Endothelial cell of umbilical vein (primary cell): ENCODE measurements at regions of chr11 and their contacts with region 1.

Region 1: DNA sequence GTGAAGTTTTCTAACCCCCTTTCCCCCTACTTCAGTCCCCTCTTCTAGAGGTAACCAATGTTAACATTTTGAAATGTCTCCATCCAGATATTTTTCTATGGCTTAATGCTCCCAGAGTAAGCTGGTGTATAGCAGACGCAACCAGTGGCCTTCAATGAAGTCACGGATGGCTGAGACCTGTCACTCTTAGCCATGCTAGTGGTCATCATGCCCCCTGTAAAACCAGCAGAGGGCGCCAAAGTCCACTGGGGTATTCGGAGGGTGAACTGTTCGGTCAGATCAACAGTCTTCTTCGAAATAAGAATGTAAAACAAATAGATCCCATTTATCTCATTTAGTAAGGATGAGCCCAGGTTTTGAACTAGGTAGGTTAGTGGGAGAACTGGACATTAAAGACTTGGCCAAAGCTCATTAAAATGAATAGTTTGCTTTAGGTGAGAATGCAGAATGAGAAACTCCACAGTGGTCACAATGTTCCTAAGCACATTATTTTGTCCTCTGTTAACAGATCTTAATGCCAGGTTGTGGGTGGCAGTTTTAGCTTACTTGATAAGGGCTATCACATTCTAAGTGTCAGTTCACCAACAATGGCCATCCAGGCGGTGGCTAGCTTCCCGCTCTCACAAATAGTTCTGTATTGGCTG is 8.6 kb upstream of the MMP8 start:
- DNase-seq: peak; percentile 64
- H3K4me3 ChIP-seq: no peak overlapping the region
- H3K27ac ChIP-seq: no peak overlapping the region
- H3K4me1 ChIP-seq: peaks cover 26% of the 10 kb centered on the region
- H3K27me3 ChIP-seq: no peaks in the 10 kb centered on the region
- CTCF ChIP-seq: peak; percentile 76 to 89
- POLR2A ChIP-seq: no peak

Region 2: DNA sequence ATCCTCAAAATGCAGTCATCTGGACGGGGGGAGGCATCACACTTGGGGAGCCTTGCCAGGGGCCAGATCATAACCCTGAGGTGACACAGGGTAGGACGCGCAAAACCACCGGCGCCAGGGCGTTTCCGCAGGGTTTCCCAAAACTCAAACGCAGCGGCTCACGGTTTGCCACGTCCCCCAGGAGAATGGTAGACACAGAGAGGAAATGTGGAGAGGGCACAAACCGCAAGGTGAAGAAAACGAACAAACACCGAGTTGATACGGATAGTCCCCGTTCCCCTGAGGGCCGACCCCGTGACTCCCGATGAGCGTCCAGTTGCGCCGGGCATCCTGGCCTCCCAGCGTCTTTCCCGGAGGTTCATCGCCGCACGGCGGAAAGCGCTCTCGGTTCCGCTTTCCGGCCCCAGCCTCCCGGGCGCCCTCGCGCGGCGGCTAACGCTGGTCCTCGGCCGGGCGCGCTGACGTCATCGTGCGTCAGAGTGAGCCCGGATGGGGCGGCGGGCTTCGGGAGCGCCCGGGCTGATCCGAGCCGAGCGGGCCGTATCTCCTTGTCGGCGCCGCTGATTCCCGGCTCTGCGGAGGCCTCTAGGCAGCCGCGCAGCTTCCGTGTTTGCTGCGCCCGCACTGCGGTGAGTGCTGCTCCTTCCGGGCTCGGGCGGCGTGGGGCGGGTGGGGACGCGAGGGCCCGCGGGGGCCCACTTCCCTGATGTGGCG is 386.4 kb before region 1 on chr11 and contains the start of gene BIRC2:
- CTCF ChIA-PET with region 1: no interaction called
- POLR2A ChIA-PET with region 1: no interaction called
- dilution Hi-C with region 1: no loop called
- intact Hi-C with region 1: loop called (anchors 1 kb)
- DNase-seq: peak; percentile 91
- H3K4me3 ChIP-seq: peak within 1 kb of the TSS; percentile 69 to 99 (median 92)
- H3K27ac ChIP-seq: peak within 1 kb of the TSS; percentile 89
- H3K4me1 ChIP-seq: peaks cover 43% of the 10 kb centered on the region
- H3K27me3 ChIP-seq: no peaks in the 10 kb centered on the region
- CTCF ChIP-seq: peak; percentile 70 to 88
- POLR2A ChIP-seq: peak; percentile 90
- total RNA-seq, gene BIRC2: 47.3 and 49.9 TPM in 2 replicates

Region 3: DNA sequence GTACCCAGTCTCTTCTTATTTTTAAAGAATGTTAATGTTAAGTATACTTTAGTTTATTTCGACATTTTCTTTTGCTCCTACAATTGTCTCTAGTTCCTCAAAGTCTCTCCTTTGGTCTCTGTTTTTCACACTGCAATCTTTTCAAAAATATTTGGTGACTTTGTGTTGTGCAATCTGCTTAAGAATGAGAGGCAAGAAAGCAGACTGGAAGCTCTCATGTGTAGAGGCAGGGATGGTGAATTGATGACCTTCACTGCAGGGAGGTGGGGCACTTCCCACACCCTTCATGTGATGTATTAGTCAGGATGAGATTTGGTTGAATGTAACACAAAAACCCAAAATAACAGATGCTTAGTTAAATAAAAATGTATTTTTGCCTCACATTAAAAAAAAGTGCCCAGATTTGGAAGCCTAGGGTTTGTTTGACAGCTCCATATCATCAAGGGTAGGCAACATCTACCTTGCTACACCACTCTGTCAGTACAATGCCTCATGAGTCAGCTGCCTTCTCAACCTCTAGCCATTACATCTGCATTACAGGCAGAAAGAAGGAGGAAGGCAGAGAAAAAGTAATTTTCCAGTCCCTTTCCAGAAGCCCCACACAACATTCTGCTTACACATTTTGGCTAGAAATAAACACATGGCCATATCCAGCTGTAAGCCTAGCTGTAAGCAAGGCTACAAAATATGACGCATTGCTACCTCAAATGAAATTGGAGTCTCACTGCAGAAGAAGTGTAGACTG is 24.0 kb before region 1 on chr11:
- CTCF ChIA-PET with region 1: no interaction called
- POLR2A ChIA-PET with region 1: no interaction called
- dilution Hi-C with region 1: no loop called
- intact Hi-C with region 1: no loop called
- DNase-seq: no peak
- H3K4me3 ChIP-seq: no peak overlapping the region
- H3K27ac ChIP-seq: no peak overlapping the region
- H3K4me1 ChIP-seq: no peaks in the 10 kb centered on the region
- H3K27me3 ChIP-seq: peaks cover 4 to 5% of the 10 kb centered on the region in 2 experiments
- CTCF ChIP-seq: no peak
- POLR2A ChIP-seq: no peak

Region 4: GRCh38 chr11:102780491-102780918 is 47.2 kb after region 1 on chr11 and contains the start of gene MMP10:
- CTCF ChIA-PET with region 1: interaction called, 12 read pairs
- POLR2A ChIA-PET with region 1: no interaction called
- dilution Hi-C with region 1: no loop called
- intact Hi-C with region 1: loop called (anchors 1 kb)
- DNase-seq: peak; percentile 89
- H3K4me3 ChIP-seq: peak within 1 kb of the TSS in 1 of 3 experiments; percentile 15
- H3K27ac ChIP-seq: peak within 1 kb of the TSS; percentile 76
- H3K4me1 ChIP-seq: peaks cover 14% of the 10 kb centered on the region
- H3K27me3 ChIP-seq: no peaks in the 10 kb centered on the region
- CTCF ChIP-seq: peak; percentile 61 to 63
- POLR2A ChIP-seq: no peak
- total RNA-seq, gene MMP10: 15.0 and 22.8 TPM in 2 replicates

Region 5: DNA sequence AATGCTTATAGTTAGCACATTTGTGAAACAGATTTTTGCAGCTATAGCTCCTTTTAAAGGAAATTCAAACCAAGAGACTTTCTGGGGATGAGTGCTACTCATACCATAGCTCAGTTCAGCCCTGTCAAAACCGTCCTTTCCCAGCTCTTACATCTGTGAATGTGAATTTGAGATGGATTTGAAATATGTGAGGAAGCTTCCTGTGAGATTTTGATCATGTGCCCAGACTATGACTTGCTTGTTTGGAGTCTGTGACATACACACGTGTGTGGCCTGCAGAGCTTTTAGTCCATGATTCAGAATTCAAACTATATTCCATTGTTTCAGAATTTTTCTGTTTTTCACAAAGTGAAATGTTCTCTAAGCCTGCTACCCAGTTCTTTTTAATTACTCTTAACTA is 69.0 kb after region 1 on chr11:
- CTCF ChIA-PET with region 1: interaction called, 3 read pairs
- POLR2A ChIA-PET with region 1: no interaction called
- dilution Hi-C with region 1: no loop called
- intact Hi-C with region 1: loop called (anchors 1 kb)
- DNase-seq: peak; percentile 30
- H3K4me3 ChIP-seq: no peak overlapping the region
- H3K27ac ChIP-seq: peak overlapping the region; percentile 39
- H3K4me1 ChIP-seq: peaks cover 29% of the 10 kb centered on the region
- H3K27me3 ChIP-seq: peaks cover 3 to 10% of the 10 kb centered on the region in 2 experiments
- CTCF ChIP-seq: no peak
- POLR2A ChIP-seq: no peak

Region 6: DNA sequence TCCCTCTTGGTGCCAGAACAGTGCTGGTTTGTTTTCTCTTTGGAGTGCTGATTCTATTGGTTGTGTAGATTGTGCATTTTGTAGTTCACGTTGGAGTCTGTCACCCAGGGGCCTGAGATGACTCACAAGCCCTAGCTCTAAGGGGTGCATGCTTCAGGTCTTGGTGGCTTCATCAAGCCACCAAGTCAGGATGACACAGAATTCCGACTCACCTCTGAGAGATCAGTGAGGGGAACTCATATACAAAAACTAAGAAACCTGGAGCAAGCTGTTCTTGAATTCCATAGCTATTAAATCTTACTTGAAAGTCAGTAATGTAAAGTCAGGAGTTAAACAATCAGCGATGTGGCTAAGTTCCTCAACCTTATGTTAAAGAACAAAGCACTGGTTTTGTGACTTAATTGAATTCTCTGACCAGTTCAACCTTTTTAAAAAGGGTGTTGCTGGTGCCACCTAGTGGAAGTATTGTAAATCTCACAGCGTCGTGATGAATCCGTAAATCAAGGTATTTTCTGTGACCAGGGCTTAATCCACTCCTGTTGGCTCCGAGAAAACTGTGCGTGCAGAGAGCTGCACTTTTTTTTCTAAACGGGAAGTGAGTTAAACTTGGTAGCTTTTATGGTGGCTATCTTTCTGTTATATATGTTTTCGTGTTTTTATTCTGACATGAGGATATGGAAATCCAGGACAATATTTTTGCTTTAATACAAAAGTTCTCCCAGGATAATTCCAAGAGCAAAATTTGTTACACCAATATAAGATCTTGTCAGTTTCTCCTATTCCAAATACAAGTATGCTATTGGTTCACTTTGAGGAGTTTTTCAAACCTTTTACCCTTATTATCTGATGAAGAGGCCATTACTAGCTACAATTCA is 207.6 kb after region 1 on chr11:
- CTCF ChIA-PET with region 1: interaction called, 7 read pairs
- POLR2A ChIA-PET with region 1: no interaction called
- dilution Hi-C with region 1: no loop called
- intact Hi-C with region 1: loop called (anchors 1 kb)
- DNase-seq: peak; percentile 79
- H3K4me3 ChIP-seq: no peak overlapping the region
- H3K27ac ChIP-seq: no peak overlapping the region
- H3K4me1 ChIP-seq: no peaks in the 10 kb centered on the region
- H3K27me3 ChIP-seq: no peaks in the 10 kb centered on the region
- CTCF ChIP-seq: peak; percentile 65 to 67
- POLR2A ChIP-seq: no peak

Region 7: DNA sequence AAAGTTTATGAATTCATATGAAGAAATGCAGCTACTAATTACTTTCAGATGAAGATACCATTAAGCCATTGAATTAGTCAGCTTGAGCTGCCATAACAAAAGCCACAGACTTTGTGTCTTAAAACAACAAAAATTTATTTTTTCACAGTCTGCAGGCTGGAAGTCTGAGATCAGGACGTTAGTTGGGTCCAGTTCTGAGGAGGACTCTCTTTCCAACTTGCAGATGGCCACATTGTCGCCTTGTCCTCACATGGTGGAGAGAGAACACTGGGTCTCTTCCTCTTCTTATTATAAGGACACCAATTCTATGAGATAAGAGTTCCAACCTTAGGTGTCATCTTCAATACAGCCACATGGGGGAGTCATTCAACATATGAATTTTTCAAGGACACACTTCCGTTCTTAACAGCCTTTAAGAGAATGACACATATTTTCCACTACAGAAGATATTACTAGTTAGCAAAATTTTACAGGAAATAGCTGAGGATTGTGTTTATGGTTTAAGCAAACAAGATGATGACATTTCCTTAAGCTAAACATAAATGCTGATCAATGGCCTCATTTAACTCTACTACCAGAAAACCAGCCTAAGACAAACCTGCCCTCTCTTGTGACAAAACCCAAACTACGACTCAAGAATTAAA is 302.6 kb after region 1 on chr11:
- CTCF ChIA-PET with region 1: interaction called, 4 read pairs
- POLR2A ChIA-PET with region 1: no interaction called
- dilution Hi-C with region 1: no loop called
- intact Hi-C with region 1: loop called (anchors 1 kb)
- DNase-seq: peak; percentile 91
- H3K4me3 ChIP-seq: no peak overlapping the region
- H3K27ac ChIP-seq: peak overlapping the region; percentile 59
- H3K4me1 ChIP-seq: peaks cover 9% of the 10 kb centered on the region
- H3K27me3 ChIP-seq: no peaks in the 10 kb centered on the region
- CTCF ChIP-seq: peak; percentile 31 to 58
- POLR2A ChIP-seq: no peak